Motor neuron (in vitro differentiated cells): ENCODE measurements at regions of chr12 and their contacts with region 1.

Region 1: DNA sequence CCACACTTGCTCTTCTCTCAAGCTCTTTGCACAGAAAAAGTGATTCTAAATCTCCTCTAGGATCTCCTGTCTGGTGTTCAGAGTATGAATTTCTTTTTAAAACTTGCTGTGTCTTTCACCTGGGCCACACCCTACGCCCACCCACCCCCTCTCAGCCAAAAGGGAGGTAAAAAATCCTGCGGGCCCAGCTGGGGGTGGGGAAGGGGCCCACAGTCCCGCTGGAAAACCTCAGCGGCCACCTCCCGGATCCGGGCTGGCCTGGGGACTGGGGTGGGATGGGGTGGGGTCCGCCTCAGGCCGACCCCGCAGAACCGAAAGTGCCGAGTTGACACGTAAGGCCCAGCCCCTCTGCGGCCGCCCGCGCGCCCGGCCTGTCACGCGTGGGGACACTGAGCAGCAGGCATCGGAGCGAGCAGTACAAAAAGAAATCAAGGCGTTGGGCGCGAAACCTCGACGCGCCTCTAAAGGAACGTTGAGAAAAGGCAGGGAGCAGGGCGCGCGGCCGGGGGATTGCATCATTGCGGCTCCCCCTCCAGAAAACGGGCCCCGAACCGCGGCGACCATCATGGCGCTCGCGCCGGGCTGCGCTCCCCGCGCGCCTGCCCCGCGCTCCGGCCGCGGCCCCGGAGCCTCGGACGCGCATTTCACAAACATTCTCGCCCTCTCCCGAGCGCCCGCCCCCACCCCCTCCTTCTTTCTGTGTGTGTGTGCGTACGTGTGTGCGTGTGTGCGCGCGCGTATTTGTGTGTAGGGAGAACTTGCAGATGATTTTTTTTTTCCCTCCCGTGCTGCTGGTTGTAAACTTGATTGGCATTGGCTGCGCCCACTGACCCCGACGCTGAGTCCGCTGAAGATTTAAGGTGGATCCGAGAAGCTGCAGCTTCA is 7.7 kb downstream of the CDKN1B start:
- ATAC-seq: peak; percentile 76 to 82 (median 78)
- H3K4me3 ChIP-seq: peak overlapping the region; percentile 57 to 77 (median 63)
- H3K27ac ChIP-seq: peak overlapping the region; percentile 92 to 95
- H3K4me1 ChIP-seq: peaks cover 0 to 2% of the 10 kb centered on the region in 2 donors

Region 2: DNA sequence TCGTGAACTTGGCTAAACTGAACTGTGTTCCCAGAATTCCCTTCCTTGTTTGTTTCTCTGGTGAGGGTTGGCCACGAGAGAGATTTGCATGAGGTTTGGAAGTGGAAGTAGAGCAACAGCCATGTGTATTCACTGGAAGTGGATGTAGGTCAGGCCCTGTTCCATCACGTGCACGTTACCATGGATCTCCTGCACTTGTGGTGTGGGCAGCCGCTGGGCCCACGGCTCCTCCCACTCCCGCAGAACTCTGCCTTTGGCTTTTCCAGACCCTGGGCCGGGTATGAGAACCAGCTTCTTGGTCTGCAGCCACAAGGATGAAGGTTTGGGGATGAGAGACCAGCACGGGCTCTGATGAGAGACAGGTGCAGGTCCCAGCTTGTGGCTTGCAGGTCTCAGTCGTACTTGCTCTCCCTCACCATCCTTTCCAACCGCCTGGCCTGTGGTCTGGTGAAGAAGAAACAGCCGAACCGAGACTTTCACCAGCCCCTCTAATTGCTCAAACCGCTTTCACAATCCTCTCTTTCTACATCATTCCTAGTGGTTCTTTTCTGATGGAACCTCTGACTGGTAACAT is 257.1 kb before region 1 on chr12:
- in situ Hi-C with region 1: no loop called
- ATAC-seq: no peak
- H3K4me3 ChIP-seq: no peak overlapping the region
- H3K27ac ChIP-seq: no peak overlapping the region
- H3K4me1 ChIP-seq: no peaks in the 10 kb centered on the region

Region 3: DNA sequence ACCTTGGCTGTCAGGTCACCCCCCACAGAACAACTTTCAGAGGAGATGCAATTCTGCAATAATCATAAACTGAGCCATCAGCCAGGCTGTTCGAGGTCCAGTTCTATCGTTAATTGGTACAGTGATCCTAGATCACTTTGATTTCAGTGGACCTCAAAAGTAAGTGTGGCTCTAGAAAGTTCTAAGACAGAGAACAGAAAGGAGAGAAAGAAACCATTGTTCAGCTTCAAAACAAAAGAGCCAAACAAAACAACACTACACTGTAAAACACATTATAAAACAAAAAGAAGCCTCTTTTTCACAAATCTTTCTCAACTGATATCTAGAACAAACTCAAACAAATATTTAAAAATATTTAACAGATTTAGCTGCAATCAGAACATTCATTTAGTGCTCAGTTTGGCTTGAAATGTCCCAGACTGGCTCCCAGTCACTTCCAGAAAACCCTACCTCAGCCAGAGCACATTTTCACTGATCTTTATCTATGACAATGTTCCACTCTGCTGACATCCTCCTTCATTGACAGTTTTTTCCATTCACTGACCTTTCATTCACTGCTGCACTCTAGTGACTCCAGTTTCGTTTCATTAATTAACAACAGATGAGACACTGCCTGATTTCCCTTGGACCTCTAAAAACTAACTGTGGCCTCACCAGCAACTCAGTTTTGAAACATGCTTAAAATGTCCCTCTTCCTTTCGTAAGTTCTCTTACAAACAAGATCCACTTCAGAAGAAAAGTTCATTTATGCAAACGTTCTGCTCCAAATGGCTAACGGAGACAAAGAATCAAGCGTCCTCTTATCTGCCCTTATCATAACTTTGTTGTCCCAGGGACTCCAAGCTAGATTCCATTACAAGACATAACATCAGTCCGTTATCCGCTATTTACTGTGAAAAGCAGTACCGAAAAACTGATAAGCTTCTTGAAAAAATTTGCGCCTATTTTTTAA is 219.1 kb before region 1 on chr12:
- in situ Hi-C with region 1: loop called in 1 of 9 experiments (anchors 25 kb)
- ATAC-seq: peak in 7 of 8 experiments; percentile 37 to 83 (median 46)
- H3K4me3 ChIP-seq: no peak overlapping the region
- H3K27ac ChIP-seq: no peak overlapping the region
- H3K4me1 ChIP-seq: peaks cover 14 to 18% of the 10 kb centered on the region in 2 donors

Region 4: GRCh38 chr12:12819671-12820311 is 94.9 kb after region 1 on chr12:
- in situ Hi-C with region 1: no loop called
- ATAC-seq: peak in 5 of 8 experiments; percentile 21 to 94 (median 78)
- H3K4me3 ChIP-seq: no peak overlapping the region
- H3K27ac ChIP-seq: no peak overlapping the region
- H3K4me1 ChIP-seq: peaks cover 0 to 2% of the 10 kb centered on the region in 2 donors

Region 5: DNA sequence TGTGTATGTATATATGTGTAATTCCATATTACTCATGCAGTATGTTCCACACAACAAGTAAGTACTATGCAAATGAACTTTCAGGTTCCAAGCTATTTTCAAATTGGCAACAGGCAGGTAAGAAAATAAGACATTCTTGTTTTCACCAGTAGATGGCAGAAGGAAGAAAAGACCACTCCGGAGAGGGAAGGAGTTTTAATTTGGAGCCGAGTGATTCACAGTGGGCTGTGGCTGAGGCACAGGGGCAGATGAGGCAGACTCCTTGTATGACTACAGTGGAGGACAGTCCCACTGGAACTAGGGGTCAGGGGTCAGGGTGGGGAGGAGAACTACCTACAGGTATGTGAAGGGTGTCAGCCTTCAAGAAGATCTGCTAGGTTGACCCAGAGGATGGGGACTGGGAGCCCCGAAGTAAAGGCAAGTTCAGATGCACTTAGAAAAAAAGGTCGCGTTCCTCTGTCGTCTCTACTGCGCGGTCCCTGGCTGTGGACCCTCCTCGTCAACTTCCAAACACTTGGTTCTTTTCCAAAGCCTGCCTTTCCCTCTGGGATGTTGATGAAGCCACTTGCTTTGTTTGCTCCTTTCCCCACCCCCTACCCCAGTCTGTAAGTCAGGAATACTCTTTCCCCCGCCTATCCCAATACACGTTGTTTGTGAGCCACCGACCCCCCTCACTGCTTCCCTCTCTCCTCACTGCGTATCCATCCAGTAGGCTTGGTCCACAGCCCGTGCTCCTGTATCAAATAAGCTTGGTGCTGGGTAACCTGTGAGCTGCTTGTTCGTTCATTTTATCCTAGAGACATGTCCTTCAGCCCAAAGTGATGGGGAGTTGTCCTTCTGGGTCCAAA is 112.3 kb after region 1 on chr12:
- in situ Hi-C with region 1: no loop called
- ATAC-seq: peak; percentile 38 to 84 (median 64)
- H3K4me3 ChIP-seq: no peak overlapping the region
- H3K27ac ChIP-seq: no peak overlapping the region
- H3K4me1 ChIP-seq: no peaks in the 10 kb centered on the region

Region 6: GRCh38 chr12:14138495-14138894 is 1413.6 kb after region 1 on chr12:
- in situ Hi-C with region 1: no loop called
- ATAC-seq: peak in 2 of 8 experiments; percentile 41 to 59
- H3K4me3 ChIP-seq: no peak overlapping the region
- H3K27ac ChIP-seq: no peak overlapping the region
- H3K4me1 ChIP-seq: no peaks in the 10 kb centered on the region